PC-3 (cell line): ENCODE measurements at regions of chr2 and their contacts with region 1.

Region 1: DNA sequence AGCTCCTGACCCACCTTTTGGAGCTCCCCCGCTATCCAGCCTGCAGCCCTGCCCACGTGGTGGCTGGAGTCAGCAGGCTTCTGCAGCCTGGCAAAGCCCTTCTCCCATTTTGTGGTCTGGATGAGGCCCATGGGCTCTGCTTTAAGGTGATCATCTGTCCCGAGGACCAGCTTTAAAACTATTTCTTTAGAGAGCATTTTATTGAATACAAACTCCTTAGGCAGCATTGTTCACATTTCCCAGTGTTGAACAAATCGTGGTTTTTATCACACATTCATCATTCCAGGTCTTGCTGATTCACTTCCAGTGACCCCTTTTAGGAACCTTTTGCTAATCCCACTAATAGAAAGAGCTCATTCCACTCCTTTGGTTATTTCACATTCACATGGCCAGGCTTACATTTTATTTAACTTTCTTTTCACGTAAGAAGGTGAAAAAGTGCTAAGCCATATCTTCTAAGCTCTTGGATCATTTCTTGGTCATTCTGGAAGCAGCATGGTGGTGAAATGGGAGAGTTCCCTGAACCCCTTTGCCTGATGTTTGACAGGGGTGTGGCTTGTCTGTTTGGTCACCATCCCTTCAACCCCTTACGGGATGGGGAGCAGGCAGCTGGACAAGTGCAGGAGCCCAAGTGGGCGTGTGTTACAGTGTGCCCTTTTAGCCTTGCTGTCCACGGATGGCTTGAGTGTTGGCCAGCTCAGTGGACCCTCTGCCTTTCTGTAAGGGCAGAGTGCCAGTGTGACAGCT is 80.4 kb upstream of the RAPGEF4 start:
- DNase-seq: peak; percentile 94
- ATAC-seq: peak; percentile 84
- H3K4me3 ChIP-seq: peak overlapping the region; percentile 41
- H3K27ac ChIP-seq: peak overlapping the region; percentile 99
- H3K4me1 ChIP-seq: peaks cover 21% of the 10 kb centered on the region
- H3K27me3 ChIP-seq: no peaks in the 10 kb centered on the region
- CTCF ChIP-seq: no peak

Region 2: GRCh38 chr2:172623249-172623965 is 31.9 kb before region 1 on chr2:
- CTCF ChIA-PET with region 1: no interaction called
- POLR2A ChIA-PET with region 1: no interaction called
- intact Hi-C with region 1: loop called (anchors 5 kb)
- DNase-seq: no peak
- ATAC-seq: peak; percentile 48
- H3K4me3 ChIP-seq: no peak overlapping the region
- H3K27ac ChIP-seq: peak overlapping the region; percentile 19
- H3K4me1 ChIP-seq: no peaks in the 10 kb centered on the region
- H3K27me3 ChIP-seq: no peaks in the 10 kb centered on the region
- CTCF ChIP-seq: no peak